ENCODE measurements at regions of chr6 and their contacts with region 1.

Region 1: DNA sequence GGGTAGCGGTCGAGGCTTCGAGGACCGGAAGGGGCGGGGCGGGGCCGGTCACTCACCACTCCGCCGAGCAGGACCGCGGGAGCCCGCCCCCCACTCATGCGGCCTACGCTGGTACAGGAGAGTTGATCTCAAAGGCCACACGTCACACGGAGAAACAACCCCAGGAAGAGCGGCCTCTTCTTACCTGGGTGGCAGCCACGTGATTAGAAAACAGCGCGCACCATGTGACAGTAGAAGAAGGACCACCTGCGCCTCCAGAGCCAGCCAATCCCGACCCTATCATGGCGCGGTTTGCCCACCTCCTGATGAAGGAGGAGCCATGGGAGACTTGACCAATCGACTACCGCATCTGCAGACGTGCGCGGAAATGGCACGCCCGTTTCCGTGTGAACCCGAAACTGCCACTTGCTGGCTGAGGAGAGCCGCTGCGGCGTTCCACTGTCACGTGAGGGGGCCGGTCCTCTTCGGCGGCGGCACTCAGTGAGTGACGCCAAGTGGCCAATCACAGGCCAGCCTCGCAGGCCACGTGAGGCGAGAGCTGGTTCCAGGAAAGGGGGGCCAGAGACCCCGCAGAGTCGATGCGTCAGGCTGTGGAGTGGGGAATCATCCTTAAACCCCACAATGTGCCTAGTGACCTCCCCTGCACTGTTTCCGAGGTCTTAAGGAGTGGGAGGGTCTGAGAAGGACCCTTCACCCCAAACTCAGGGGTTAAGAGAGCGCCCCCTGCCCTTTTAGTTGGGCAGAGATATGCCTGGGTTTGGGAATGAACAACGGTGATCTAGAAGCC is at the start of gene CUTA:
- DNase-seq: peak; percentile 99 to 100
- H3K4me3 ChIP-seq: peak within 1 kb of the TSS; percentile 79 to 83
- H3K27ac ChIP-seq: peak within 1 kb of the TSS; percentile 88 to 95
- H3K4me1 ChIP-seq: peaks cover 0 to 65% (median 49%) of the 10 kb centered on the region in 4 donors
- H3K27me3 ChIP-seq: no peaks in the 10 kb centered on the region
- CTCF ChIP-seq: no peak

Region 2: GRCh38 chr6:31652925-31653718 is 1765.0 kb before region 1 on chr6:
- intact Hi-C with region 1: no loop called
- DNase-seq: peak; percentile 93 to 94
- H3K4me3 ChIP-seq: peak overlapping the region; percentile 78 to 85
- H3K27ac ChIP-seq: peak overlapping the region; percentile 95 to 98
- H3K4me1 ChIP-seq: peaks cover 0 to 43% (median 25%) of the 10 kb centered on the region in 4 donors
- H3K27me3 ChIP-seq: no peaks in the 10 kb centered on the region
- CTCF ChIP-seq: no peak

Region 3: DNA sequence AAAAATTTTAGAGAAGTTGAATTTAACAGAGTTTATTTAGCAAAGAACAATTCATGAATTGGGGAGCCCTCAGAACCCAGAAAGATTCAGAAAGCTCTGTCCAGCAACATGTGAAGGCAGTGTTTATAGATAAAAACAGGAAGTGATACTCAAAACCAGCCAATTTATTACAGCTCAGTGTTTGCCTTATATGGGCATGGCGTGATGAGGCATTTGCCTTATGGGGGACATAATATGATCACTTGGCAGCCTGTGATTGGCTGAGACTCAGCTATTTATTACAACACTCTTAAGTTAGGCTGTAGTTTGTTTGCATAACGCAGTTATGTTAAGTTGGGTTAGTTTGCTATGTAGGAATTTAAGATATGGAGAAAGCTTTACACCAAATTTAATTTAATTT is 356.1 kb before region 1 on chr6:
- intact Hi-C with region 1: no loop called
- DNase-seq: no peak
- H3K4me3 ChIP-seq: no peak overlapping the region
- H3K27ac ChIP-seq: no peak overlapping the region
- H3K4me1 ChIP-seq: no peaks in the 10 kb centered on the region
- H3K27me3 ChIP-seq: no peaks in the 10 kb centered on the region
- CTCF ChIP-seq: no peak

Region 4: GRCh38 chr6:33299237-33299944 is 118.7 kb before region 1 on chr6:
- intact Hi-C with region 1: loop called (anchors 10 kb)
- DNase-seq: peak; percentile 89 to 96
- H3K4me3 ChIP-seq: peak overlapping the region; percentile 76 to 79
- H3K27ac ChIP-seq: peak overlapping the region; percentile 94 to 97
- H3K4me1 ChIP-seq: peaks cover 0 to 42% (median 24%) of the 10 kb centered on the region in 4 donors
- H3K27me3 ChIP-seq: no peaks in the 10 kb centered on the region
- CTCF ChIP-seq: peak; percentile 65 to 68